ENCODE measurements at regions of chr16 and their contacts with region 1.

Region 1: GRCh38 chr16:87132491-87132961 is 184.7 kb downstream of the C16orf95 start:
- DNase-seq: no peak
- ATAC-seq: no peak
- H3K4me3 ChIP-seq: no peak overlapping the region
- H3K4me1 ChIP-seq: no peaks in the 10 kb centered on the region
- CTCF ChIP-seq: no peak

Region 2: DNA sequence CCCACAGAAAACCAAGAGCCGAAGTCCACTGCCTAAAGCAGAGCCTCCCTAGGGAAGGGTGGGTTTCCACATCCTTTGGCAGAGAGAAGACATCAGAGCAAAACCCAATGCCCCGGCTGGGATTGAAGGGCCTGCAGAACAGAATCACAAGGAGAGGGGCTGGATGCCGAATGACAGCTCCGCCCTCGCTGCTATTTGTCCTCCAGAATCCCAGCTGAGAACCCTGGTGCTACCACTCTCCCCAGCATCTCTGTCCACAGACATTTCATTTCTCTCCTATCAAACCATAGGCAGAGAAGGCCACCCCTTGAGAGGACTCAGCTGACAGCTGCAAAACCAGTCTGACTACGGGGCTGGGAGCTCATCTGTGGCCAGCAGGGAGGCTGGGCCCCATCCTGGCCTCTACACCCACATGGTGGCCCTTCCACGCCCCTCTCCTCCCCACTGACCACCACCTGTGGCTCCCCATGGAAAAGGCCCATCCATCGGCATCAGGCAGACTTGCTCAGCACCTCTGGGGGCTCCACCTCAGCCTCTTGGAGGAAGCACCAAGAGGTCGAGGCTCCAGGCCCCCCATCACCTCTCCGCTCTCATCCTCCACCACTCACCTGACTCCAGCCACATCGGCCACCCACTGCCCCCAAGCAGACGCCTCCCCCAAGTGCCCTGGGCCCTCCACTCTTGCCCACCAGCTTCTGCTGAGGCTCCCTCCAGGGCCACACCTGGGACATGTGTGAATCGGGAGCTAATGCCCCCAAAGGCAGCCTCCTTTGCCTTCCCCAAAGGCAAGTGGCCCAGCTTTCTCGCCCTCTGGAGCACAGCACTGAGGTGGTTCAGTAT is 103.8 kb before region 1 on chr16:
- intact Hi-C with region 1: no loop called
- DNase-seq: no peak
- ATAC-seq: no peak
- H3K4me3 ChIP-seq: no peak overlapping the region
- H3K4me1 ChIP-seq: no peaks in the 10 kb centered on the region
- CTCF ChIP-seq: no peak

Region 3: GRCh38 chr16:87108941-87109340 is 23.6 kb before region 1 on chr16:
- intact Hi-C with region 1: loop called in 1 of 2 experiments (anchors 2 kb)
- DNase-seq: no peak
- ATAC-seq: no peak
- H3K4me3 ChIP-seq: no peak overlapping the region
- H3K4me1 ChIP-seq: no peaks in the 10 kb centered on the region
- CTCF ChIP-seq: no peak

Measured in mucosa of descending colon (tissue), 3 donors.